HCT116 (cell line): ENCODE measurements at regions of chr12 and their contacts with region 1.

Region 1: DNA sequence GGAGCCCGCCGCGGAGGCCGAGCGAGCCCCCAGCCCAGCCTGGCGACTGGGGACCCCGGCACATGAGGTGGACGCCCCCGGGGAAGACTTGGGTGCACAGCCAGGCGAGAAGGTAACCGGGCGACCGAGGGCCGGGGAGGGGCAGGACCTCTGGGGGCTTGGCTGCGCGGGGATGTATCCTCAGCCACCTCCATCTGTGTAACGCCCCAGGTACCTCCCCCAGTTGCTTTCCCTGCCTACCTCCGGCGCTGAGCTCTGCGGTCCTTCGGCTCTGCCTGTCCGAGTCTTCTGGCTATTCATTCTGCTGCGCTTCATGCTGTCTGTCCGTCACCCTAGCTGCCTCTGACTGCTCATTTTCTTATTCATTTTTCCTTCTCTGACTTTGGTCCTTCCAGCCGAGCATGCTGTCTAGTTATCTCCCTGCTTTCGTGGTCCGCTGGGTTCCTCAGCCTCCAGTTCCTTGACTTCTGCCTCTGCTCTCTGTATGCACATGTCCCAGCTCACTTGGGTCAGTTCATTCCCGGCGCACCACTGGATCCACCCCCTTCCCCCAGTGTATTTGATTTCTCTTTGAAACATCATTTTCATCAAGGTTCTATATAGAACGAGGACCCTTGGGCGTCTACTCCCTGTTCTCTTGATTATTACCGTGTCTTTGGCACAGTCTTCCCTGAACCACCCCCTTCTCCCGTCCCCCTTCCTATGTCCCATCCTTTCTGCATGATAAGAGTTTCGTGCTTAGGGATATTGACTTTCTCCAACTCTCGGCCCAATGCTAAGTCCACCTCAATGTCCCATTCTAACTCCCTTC is 612 bp downstream of the PHC1 start:
- DNase-seq: no peak
- ATAC-seq: peak; percentile 95
- H3K4me3 ChIP-seq: peak overlapping the region; percentile 68 to 82
- H3K27ac ChIP-seq: peak overlapping the region; percentile 40; the same call in 1 of the 2 replicates
- H3K4me1 ChIP-seq: peaks cover 14 to 27% of the 10 kb centered on the region in 2 experiments; a peak in 3 of 4 replicates
- H3K27me3 ChIP-seq: no peaks in the 10 kb centered on the region
- CTCF ChIP-seq: no peak
- POLR2A ChIP-seq: no peak
- RAD21 ChIP-seq: no peak

Region 2: GRCh38 chr12:8949342-8950220 is 34.7 kb after region 1 on chr12 and contains the start of gene M6PR:
- CTCF ChIA-PET with region 1: interaction called, 8 read pairs
- POLR2A ChIA-PET with region 1: no interaction called
- RAD21 ChIA-PET with region 1: no interaction called
- intact Hi-C with region 1: loop called (anchors 5 kb)
- DNase-seq: peak; percentile 90
- ATAC-seq: peak; percentile 91
- H3K4me3 ChIP-seq: peak within 1 kb of the TSS; percentile 70 to 93
- H3K27ac ChIP-seq: peak within 1 kb of the TSS; percentile 83
- H3K4me1 ChIP-seq: peaks cover 3 to 26% of the 10 kb centered on the region in 2 experiments; a peak in 3 of 4 replicates
- H3K27me3 ChIP-seq: no peaks in the 10 kb centered on the region
- CTCF ChIP-seq: peak in 2 of 3 experiments; percentile 38 to 51; a peak in 3 of 6 replicates
- POLR2A ChIP-seq: peak; percentile 58
- RAD21 ChIP-seq: peak; percentile 57
- total RNA-seq, gene M6PR: 142 TPM

Region 3: GRCh38 chr12:9103050-9103849 is 188.3 kb after region 1 on chr12:
- CTCF ChIA-PET with region 1: no interaction called
- POLR2A ChIA-PET with region 1: no interaction called
- RAD21 ChIA-PET with region 1: no interaction called
- intact Hi-C with region 1: no loop called
- DNase-seq: no peak
- ATAC-seq: no peak
- H3K4me3 ChIP-seq: no peak overlapping the region
- H3K27ac ChIP-seq: no peak overlapping the region
- H3K4me1 ChIP-seq: no peaks in the 10 kb centered on the region
- H3K27me3 ChIP-seq: no peaks in the 10 kb centered on the region
- CTCF ChIP-seq: no peak
- POLR2A ChIP-seq: no peak
- RAD21 ChIP-seq: no peak